Ovary (tissue), 10 donors: ENCODE measurements at regions of chr9 and their contacts with region 1.

Region 1: DNA sequence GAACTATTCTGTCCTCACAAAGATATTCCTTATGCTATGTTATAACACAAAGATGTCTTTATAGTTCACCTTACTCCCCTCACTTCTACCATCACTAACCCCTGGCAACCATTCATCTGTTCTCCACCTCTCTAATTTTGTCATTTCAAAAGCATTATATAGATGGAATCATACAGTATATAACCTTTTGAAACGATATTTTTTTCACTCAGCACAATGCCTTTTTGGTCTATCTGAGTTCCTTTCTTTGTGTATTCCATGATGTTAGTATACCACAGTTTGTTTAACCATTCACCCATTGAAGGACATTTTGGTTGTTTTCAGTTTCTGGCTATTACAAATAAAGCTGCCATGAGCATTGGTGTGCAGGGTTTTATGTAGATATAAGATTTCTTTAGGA is 35.8 kb upstream of the STOM start:
- DNase-seq: no peak
- H3K4me3 ChIP-seq: no peak overlapping the region
- H3K27ac ChIP-seq: no peak overlapping the region
- H3K4me1 ChIP-seq: no peaks in the 10 kb centered on the region
- H3K27me3 ChIP-seq: no peaks in the 10 kb centered on the region
- CTCF ChIP-seq: no peak
- EP300 ChIP-seq: no peak
- POLR2A ChIP-seq: no peak

Region 2: GRCh38 chr9:120066315-120066714 is 1339.6 kb before region 1 on chr9:
- intact Hi-C with region 1: no loop called
- DNase-seq: no peak
- H3K4me3 ChIP-seq: no peak overlapping the region
- H3K27ac ChIP-seq: no peak overlapping the region
- H3K4me1 ChIP-seq: no peaks in the 10 kb centered on the region
- H3K27me3 ChIP-seq: no peaks in the 10 kb centered on the region
- CTCF ChIP-seq: no peak
- EP300 ChIP-seq: no peak
- POLR2A ChIP-seq: no peak

Region 3: DNA sequence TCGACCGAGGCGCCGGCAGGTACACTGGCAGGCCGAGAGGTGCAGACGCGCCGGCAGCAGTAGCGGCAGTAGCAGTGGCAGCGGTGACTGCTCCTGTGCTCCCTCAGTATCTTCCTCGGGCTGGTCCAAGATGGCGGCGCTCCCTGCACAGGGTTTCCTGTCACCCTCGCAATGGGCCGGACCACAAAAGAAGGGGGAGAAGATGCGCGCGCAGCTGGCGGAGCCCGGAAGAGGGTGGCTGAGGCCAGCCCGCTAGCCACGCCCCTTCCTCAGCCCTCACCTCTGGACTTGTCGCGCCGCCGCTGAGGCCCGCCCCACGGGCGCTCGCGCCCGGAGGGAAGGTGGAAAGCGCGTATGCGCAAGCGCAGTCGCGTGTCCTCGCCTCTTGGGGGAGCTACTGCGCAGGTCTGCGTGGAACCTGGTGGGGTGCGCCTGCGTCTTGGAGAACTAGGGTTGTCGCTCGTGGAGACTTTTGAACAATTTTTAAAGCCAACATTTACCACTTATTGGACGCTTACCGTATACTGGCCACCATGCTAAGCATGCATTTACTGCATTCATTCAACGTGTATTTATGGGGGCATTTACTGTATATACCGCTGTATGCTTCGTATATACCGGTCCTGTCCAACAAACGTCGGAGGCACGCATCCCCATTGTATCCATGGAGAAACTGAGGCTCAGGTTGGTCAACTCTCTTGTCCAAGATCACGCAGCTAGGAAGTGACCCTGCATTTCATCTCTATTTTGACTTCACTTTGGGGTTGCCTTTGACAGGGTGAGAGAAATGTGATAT is 204.0 kb before region 1 on chr9 and contains the start of gene RAB14:
- intact Hi-C with region 1: no loop called
- DNase-seq: peak; percentile 100
- H3K4me3 ChIP-seq: peak within 1 kb of the TSS; percentile 97
- H3K27ac ChIP-seq: peak within 1 kb of the TSS; percentile 77 to 86
- H3K4me1 ChIP-seq: peaks cover 3% of the 10 kb centered on the region
- H3K27me3 ChIP-seq: no peaks in the 10 kb centered on the region
- CTCF ChIP-seq: peak; percentile 49 to 65 (median 53)
- EP300 ChIP-seq: no peak
- POLR2A ChIP-seq: peak; percentile 59
- total RNA-seq, gene RAB14: 22.9 to 64.4 (median 57.1) TPM

Region 4: GRCh38 chr9:121439711-121440664 is 34.1 kb after region 1 on chr9:
- intact Hi-C with region 1: loop called in 1 of 4 experiments (anchors 2 kb)
- DNase-seq: no peak
- H3K4me3 ChIP-seq: no peak overlapping the region
- H3K27ac ChIP-seq: no peak overlapping the region
- H3K4me1 ChIP-seq: peaks cover 2% of the 10 kb centered on the region
- H3K27me3 ChIP-seq: no peaks in the 10 kb centered on the region
- CTCF ChIP-seq: no peak
- EP300 ChIP-seq: no peak
- POLR2A ChIP-seq: no peak